H1 (cell line): ENCODE measurements at regions of chr20 and their contacts with region 1.

Region 1: DNA sequence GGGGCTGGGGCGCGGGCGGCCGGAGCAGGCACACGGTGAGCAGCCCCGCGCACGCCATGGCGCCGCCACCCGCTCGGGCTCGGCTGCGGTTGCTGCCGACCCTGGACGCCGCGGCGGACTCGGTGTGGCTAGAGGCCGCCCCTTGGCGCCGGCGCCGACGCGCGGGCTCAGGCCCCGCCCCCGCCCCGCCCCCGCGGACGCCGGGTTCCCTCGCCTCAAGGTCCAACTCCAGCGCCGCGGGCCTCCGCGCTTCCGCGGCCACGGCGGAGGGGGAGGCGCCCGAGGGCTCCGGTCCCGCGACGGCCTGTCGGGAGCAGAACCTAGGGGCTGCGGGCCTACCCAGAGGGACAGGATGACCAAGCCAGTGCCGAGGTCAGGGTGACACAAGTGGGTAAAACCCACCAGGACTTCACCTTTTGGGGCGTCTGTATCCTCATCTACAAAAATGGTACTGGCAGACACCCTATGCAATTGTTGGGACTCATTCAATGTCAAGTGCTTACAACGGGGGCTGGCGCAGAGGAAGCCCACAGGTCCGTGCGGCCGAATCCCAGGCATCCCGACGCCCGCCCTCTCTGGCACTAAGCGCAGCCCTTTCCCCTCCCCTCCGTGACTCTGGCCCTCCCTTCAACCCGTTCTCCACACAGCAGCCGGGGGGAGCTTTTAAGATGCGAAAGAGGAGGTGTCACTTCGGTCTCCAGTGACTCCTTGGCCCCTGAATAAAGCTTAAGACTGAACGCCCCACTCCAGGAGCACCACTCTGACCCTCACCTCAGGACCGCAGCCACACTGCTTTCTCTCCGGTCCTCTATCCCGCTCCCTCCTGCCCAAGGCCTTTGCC is at the start of gene NECAB3:
- DNase-seq: peak in 1 of 2 experiments; percentile 87
- H3K4me3 ChIP-seq: peak within 1 kb of the TSS; percentile 52 to 77 (median 70)
- H3K27ac ChIP-seq: no peak within 1 kb of the TSS; the same call in 1 of the 2 replicates
- H3K4me1 ChIP-seq: peaks cover 0 to 22% (median 11%) of the 10 kb centered on the region in 4 experiments; a peak in 4 of 7 replicates
- H3K27me3 ChIP-seq: no peaks in the 10 kb centered on the region
- CTCF ChIP-seq: no peak
- EP300 ChIP-seq: no peak
- POLR2A ChIP-seq: peak; percentile 4 to 31
- RAD21 ChIP-seq: no peak
- total RNA-seq, gene NECAB3: 19.7 and 20.5 TPM in 2 replicates

Region 2: GRCh38 chr20:33277471-33278441 is 396.8 kb before region 1 on chr20:
- CTCF ChIA-PET with region 1: no interaction called
- POLR2A ChIA-PET with region 1: no interaction called
- DNase-seq: no peak
- H3K4me3 ChIP-seq: no peak overlapping the region
- H3K27ac ChIP-seq: 0 out of 2 replicates have a peak overlapping the region, but pooled peaks have one; percentile 1
- H3K4me1 ChIP-seq: peaks cover 0 to 14% (median 11%) of the 10 kb centered on the region in 4 experiments; a peak in 6 of 7 replicates
- H3K27me3 ChIP-seq: no peaks in the 10 kb centered on the region
- CTCF ChIP-seq: no peak
- EP300 ChIP-seq: no peak
- POLR2A ChIP-seq: no peak
- RAD21 ChIP-seq: no peak

Region 3: DNA sequence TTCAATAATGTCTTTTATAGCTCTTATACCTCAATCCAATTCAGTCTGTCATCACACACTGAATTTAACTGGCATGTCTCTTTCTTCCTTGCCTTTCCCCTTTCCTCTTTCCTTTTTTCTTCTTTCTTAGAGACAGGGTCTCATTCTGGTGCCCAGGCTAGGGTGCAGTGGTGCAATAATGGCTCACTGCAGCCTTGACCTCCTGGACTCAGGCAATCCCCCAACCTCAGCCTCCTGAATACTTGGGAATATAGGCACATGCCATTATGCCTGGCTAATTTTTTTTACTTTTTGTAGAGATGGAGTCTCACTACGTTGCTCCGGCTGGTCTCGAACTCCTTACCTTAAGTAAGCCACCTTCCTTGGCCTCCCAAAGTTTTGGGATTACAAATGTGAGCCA is 118.8 kb before region 1 on chr20:
- CTCF ChIA-PET with region 1: no interaction called
- POLR2A ChIA-PET with region 1: no interaction called
- DNase-seq: no peak
- H3K4me3 ChIP-seq: no peak overlapping the region
- H3K27ac ChIP-seq: no peak overlapping the region
- H3K4me1 ChIP-seq: no peaks in the 10 kb centered on the region; a peak in 1 of 7 replicates
- H3K27me3 ChIP-seq: no peaks in the 10 kb centered on the region
- CTCF ChIP-seq: no peak
- EP300 ChIP-seq: no peak
- POLR2A ChIP-seq: no peak
- RAD21 ChIP-seq: no peak

Region 4: DNA sequence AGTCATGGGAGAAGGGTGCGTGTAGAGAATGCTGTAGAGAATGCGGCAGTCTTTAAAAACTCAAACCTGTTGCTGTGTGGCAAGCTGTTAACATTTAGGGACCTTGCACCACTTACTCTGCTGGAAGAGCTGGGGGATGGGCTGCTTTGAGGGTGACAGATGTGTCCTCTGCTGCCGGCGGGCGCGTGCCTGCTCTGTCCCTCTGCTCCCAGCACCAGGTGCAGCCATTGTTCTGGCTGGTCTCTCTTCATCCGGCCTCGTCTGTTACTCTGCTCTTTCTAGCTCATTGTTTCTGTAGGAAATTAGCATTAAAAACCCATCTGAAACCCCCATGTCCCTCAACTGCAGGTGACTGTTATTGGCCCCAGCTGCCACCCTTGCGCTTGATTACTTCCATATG is 106.1 kb before region 1 on chr20:
- CTCF ChIA-PET with region 1: no interaction called
- POLR2A ChIA-PET with region 1: no interaction called
- DNase-seq: peak; percentile 75 to 89
- H3K4me3 ChIP-seq: peak overlapping the region in 1 of 4 experiments; percentile 27; a peak in 3 of 8 replicates
- H3K27ac ChIP-seq: no peak overlapping the region
- H3K4me1 ChIP-seq: peaks cover 0 to 12% (median 8%) of the 10 kb centered on the region in 4 experiments; a peak in 3 of 7 replicates
- H3K27me3 ChIP-seq: peaks cover 0 to 14% (median 10%) of the 10 kb centered on the region in 4 experiments; a peak in 4 of 7 replicates
- CTCF ChIP-seq: no peak
- EP300 ChIP-seq: peak in 1 of 2 experiments; percentile 96; a peak in 2 of 3 replicates
- POLR2A ChIP-seq: no peak
- RAD21 ChIP-seq: peak in 1 of 2 experiments; percentile 14; a peak in 1 of 4 replicates

Region 5: DNA sequence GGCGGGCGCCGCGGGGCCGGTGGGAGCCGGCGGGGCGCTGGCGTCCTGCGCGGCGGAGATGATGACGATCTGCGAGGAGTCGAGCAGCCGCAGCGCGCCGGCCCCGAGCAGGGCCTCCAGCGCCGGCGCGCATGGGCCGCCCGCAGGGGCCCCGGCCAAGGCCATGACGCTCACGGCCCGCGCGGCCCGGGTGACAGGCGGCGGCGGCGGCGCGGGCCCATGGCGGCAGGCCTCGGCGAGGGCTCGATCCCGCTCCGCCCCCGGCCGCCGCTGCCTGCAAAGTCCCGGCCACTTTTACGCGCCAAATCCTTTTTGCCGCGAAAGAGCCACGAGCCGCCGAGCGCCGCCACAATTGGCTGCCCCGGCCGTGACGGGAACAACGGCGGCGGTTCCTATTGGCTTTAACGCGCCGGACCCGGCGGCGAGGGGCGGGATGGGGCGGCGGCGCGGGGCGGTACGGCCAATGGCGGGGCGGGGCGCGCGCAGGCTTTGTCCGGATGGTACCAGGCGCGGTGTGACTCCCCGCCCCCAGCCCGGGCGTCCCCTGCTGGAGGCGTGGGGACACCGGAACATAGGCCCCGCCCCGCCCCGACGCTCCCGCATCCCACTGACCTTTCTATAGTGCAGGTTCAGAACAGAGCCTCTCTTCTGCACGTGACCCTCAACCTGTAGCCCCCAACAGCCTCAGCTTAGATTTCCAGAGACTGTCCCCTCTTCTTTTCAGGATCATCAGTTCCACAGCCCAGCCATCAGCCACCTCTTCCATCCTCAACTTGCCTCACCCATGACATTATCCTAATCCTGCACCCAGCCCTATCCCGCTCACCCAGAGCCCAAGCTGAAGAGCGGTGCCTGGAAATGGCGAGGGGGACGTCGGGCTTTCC is 11.8 kb after region 1 on chr20 and contains the start of gene E2F1:
- CTCF ChIA-PET with region 1: interaction called, 17 read pairs
- POLR2A ChIA-PET with region 1: interaction called, 245 read pairs
- DNase-seq: peak in 1 of 2 experiments; percentile 97
- H3K4me3 ChIP-seq: peak within 1 kb of the TSS; percentile 86 to 97 (median 94)
- H3K27ac ChIP-seq: peak within 1 kb of the TSS; percentile 64
- H3K4me1 ChIP-seq: peaks cover 4 to 25% (median 15%) of the 10 kb centered on the region in 4 experiments
- H3K27me3 ChIP-seq: peaks cover 0 to 9% (median 2%) of the 10 kb centered on the region in 4 experiments; a peak in 4 of 7 replicates
- CTCF ChIP-seq: peak in 1 of 3 experiments; percentile 34; a peak in 2 of 4 replicates
- EP300 ChIP-seq: no peak
- POLR2A ChIP-seq: peak; percentile 60 to 69
- RAD21 ChIP-seq: peak in 1 of 2 experiments; percentile 2; a peak in 1 of 4 replicates
- total RNA-seq, gene E2F1: 35.3 and 35.8 TPM in 2 replicates